ENCODE measurements at regions of chr17 and their contacts with region 1.

Region 1: GRCh38 chr17:44199553-44200477 is at the start of gene ATXN7L3:
- DNase-seq: peak; percentile 99
- ATAC-seq: peak; percentile 96
- total RNA-seq, gene ATXN7L3: 40.8 TPM

Region 2: GRCh38 chr17:44186307-44187130 is 13.3 kb before region 1 on chr17 and contains the start of gene TMUB2:
- intact Hi-C with region 1: loop called (anchors 2 kb)
- DNase-seq: peak; percentile 99
- ATAC-seq: peak; percentile 97
- total RNA-seq, gene TMUB2: 20.8 TPM

Region 3: GRCh38 chr17:44218344-44219107 is 18.7 kb after region 1 on chr17:
- intact Hi-C with region 1: loop called (anchors 1 kb)
- DNase-seq: peak; percentile 95
- ATAC-seq: peak; percentile 67

Region 4: GRCh38 chr17:44503147-44504029 is 303.6 kb after region 1 on chr17 and contains the start of gene GPATCH8:
- intact Hi-C with region 1: loop called (anchors 10 kb)
- DNase-seq: peak; percentile 96
- ATAC-seq: peak; percentile 99
- total RNA-seq, gene GPATCH8: 15.3 TPM

Measured in Right ventricle myocardium inferior (tissue), 1 donor.